Psoas muscle (tissue), 8 donors: ENCODE measurements at regions of chr16 and their contacts with region 1.

Region 1: GRCh38 chr16:352547-353403 is at the start of gene AXIN1:
- DNase-seq: peak; percentile 99 to 100
- ATAC-seq: peak; percentile 92 to 95 (median 93)
- H3K4me3 ChIP-seq: peak within 1 kb of the TSS; percentile 79
- H3K27ac ChIP-seq: peak within 1 kb of the TSS; percentile 76
- H3K4me1 ChIP-seq: peaks cover 11% of the 10 kb centered on the region
- H3K27me3 ChIP-seq: no peaks in the 10 kb centered on the region
- CTCF ChIP-seq: peak; percentile 47
- total RNA-seq, gene AXIN1: 12.1 to 23.2 (median 22.8) TPM

Region 2: DNA sequence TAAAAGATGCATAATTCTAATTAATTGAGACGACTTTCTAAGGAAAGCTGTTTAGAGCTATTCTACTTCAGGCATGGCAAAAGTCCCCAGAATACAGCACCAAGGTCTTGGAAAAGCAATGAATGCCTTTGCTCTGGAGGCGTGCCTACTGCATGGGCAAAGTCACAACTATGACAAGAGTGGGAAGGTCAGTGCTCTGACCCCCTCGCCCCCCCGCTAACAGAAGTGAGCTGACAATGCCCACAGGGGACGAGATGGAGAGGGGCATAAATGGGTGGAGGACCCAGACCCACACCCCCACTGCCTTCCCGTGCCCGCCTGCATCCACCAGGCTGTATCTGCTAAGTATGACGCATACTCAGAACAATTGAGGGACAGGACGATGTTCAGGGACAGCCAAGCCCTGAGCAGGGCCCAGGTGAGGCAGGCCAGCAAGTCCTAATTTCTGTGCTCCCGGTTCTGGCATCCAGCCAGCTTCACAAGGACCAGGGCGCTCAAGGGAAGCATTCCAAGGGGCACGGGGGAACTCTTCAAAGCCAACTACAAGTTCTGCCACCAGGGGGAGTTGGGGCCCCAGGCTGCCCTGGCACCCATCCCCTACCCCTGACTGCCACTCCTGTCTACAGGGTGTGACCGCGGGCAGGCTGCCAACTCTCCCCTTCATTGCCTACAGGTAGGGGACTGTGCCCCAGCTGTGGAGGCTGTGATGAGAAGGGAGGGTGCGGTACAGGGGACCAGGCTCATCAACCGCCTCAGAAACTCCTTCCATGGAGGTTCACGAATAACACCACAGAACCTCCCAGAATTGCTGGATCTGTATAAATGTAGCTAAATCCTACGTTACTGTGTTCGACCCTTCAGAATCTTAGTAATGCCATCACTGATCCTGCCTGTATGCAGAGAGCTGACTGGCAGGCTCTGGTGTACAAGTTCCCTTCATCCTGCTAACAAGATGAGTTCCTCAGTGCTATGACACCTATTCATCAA is 235.1 kb before region 1 on chr16:
- intact Hi-C with region 1: loop called in 1 of 2 experiments (anchors 5 kb)
- DNase-seq: peak; percentile 42 to 69
- ATAC-seq: peak; percentile 47 to 76 (median 66)
- H3K4me3 ChIP-seq: no peak overlapping the region
- H3K27ac ChIP-seq: no peak overlapping the region
- H3K4me1 ChIP-seq: no peaks in the 10 kb centered on the region
- H3K27me3 ChIP-seq: no peaks in the 10 kb centered on the region
- CTCF ChIP-seq: peak; percentile 50

Region 3: DNA sequence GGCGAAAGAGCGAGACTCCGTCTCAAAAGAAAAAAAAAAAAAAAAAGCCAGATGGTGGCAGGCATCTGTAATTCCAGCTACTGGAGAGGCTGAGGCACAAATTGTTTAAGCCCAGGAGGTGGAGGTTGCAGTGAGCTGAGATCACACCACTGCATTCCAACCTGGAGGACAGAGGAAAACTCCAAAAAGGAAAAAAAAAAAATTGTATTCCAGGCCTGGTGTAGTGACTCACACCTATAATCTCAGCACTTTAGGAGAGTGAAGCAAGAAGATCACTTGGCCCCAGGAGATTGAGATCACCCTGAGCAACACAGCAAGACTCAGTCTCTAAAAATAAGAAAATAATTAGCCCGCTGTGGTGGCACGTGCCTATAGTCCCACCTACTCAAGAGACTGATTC is 152.4 kb before region 1 on chr16:
- intact Hi-C with region 1: loop called in 1 of 2 experiments (anchors 10 kb)
- DNase-seq: no peak
- ATAC-seq: peak in 3 of 4 donors; percentile 26 to 33 (median 27)
- H3K4me3 ChIP-seq: no peak overlapping the region
- H3K27ac ChIP-seq: no peak overlapping the region
- H3K4me1 ChIP-seq: no peaks in the 10 kb centered on the region
- H3K27me3 ChIP-seq: no peaks in the 10 kb centered on the region
- CTCF ChIP-seq: no peak

Region 4: GRCh38 chr16:228818-229730 is 123.7 kb before region 1 on chr16 and contains the start of gene LUC7L:
- intact Hi-C with region 1: loop called (anchors 5 kb)
- DNase-seq: peak; percentile 91 to 94
- ATAC-seq: peak; percentile 94 to 97 (median 95)
- H3K4me3 ChIP-seq: peak within 1 kb of the TSS; percentile 89
- H3K27ac ChIP-seq: peak within 1 kb of the TSS; percentile 97
- H3K4me1 ChIP-seq: peaks cover 12% of the 10 kb centered on the region
- H3K27me3 ChIP-seq: no peaks in the 10 kb centered on the region
- CTCF ChIP-seq: no peak
- total RNA-seq, gene LUC7L: 23.8 to 30.3 (median 27.1) TPM